H1 (cell line): ENCODE measurements at regions of chr17 and their contacts with region 1.

Region 1: GRCh38 chr17:42019509-42020404 is at the start of gene NKIRAS2:
- DNase-seq: peak; percentile 72 to 94
- H3K4me3 ChIP-seq: peak within 1 kb of the TSS; percentile 84 to 99 (median 89)
- H3K27ac ChIP-seq: no peak within 1 kb of the TSS
- H3K4me1 ChIP-seq: peaks cover 0 to 5% (median 1%) of the 10 kb centered on the region in 4 experiments; a peak in 3 of 7 replicates
- H3K27me3 ChIP-seq: no peaks in the 10 kb centered on the region
- CTCF ChIP-seq: peak; percentile 77 to 85 (median 81)
- EP300 ChIP-seq: no peak
- POLR2A ChIP-seq: peak in 1 of 2 experiments; percentile 77; a peak in 1 of 3 replicates
- RAD21 ChIP-seq: peak in 1 of 2 experiments; percentile 33; a peak in 2 of 4 replicates
- total RNA-seq, gene NKIRAS2: 31.1 and 34.5 TPM in 2 replicates

Region 2: GRCh38 chr17:41918314-41919164 is 101.2 kb before region 1 on chr17 and contains the start of gene ACLY:
- CTCF ChIA-PET with region 1: interaction called, 4 read pairs
- POLR2A ChIA-PET with region 1: interaction called, 15 read pairs
- DNase-seq: peak; percentile 94 to 98
- H3K4me3 ChIP-seq: peak within 1 kb of the TSS; percentile 74 to 99 (median 93)
- H3K27ac ChIP-seq: peak within 1 kb of the TSS; percentile 85
- H3K4me1 ChIP-seq: peaks cover 13 to 31% (median 24%) of the 10 kb centered on the region in 4 experiments
- H3K27me3 ChIP-seq: no peaks in the 10 kb centered on the region
- CTCF ChIP-seq: 0 out of 4 replicates have a peak, but pooled peaks of 1 of the 3 experiments have one; percentile 5
- EP300 ChIP-seq: no peak; a peak in 1 of 3 replicates
- POLR2A ChIP-seq: peak; percentile 30 to 95
- RAD21 ChIP-seq: no peak
- total RNA-seq, gene ACLY: 388 and 393 TPM in 2 replicates

Region 3: DNA sequence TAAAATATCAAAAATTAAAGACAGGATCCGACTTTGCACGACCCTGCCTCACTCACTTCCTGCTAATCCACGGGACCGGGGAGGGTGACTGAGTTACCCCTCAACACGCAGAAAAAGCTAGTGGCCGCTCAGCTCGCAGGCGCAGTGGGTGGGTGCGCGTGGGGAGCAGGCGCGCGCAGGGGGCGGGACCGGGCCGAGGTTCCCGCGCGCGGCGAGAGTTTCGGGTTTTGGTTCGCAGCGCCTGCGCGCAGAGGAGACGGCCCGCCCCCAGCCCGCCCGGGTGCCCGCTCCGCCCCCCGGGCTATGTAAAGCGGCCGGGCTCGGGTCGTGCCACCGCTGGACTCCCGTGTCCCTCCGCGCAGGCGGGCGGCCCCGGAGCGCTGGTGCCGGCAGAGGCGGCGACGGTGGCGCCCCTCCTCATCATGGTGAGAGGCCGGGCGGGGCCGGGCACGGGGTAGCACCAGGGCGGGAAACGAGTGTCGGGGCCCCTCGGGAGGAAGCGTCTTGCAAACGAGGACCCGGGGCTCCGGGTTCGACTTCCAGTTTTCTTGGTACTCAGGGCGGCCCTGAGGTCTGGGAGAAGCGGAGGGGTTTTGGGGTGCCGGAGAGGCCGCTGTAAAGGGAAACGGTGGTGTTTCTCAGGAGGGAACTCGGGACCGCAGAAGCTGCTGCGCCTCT is 53.2 kb before region 1 on chr17 and contains the start of gene CNP:
- CTCF ChIA-PET with region 1: interaction called, 8 read pairs
- POLR2A ChIA-PET with region 1: interaction called, 67 read pairs
- DNase-seq: peak in 1 of 2 experiments; percentile 90
- H3K4me3 ChIP-seq: peak within 1 kb of the TSS; percentile 71 to 96 (median 78)
- H3K27ac ChIP-seq: peak within 1 kb of the TSS; percentile 65
- H3K4me1 ChIP-seq: peaks cover 0 to 10% (median 5%) of the 10 kb centered on the region in 4 experiments; a peak in 6 of 7 replicates
- H3K27me3 ChIP-seq: no peaks in the 10 kb centered on the region
- CTCF ChIP-seq: no peak
- EP300 ChIP-seq: 0 out of 3 replicates have a peak, but pooled peaks of 1 of the 2 experiments have one; percentile 7
- POLR2A ChIP-seq: peak; percentile 49 to 53; a peak in 2 of 3 replicates
- RAD21 ChIP-seq: no peak
- total RNA-seq, gene CNP: 60.6 and 64.2 TPM in 2 replicates

Region 4: DNA sequence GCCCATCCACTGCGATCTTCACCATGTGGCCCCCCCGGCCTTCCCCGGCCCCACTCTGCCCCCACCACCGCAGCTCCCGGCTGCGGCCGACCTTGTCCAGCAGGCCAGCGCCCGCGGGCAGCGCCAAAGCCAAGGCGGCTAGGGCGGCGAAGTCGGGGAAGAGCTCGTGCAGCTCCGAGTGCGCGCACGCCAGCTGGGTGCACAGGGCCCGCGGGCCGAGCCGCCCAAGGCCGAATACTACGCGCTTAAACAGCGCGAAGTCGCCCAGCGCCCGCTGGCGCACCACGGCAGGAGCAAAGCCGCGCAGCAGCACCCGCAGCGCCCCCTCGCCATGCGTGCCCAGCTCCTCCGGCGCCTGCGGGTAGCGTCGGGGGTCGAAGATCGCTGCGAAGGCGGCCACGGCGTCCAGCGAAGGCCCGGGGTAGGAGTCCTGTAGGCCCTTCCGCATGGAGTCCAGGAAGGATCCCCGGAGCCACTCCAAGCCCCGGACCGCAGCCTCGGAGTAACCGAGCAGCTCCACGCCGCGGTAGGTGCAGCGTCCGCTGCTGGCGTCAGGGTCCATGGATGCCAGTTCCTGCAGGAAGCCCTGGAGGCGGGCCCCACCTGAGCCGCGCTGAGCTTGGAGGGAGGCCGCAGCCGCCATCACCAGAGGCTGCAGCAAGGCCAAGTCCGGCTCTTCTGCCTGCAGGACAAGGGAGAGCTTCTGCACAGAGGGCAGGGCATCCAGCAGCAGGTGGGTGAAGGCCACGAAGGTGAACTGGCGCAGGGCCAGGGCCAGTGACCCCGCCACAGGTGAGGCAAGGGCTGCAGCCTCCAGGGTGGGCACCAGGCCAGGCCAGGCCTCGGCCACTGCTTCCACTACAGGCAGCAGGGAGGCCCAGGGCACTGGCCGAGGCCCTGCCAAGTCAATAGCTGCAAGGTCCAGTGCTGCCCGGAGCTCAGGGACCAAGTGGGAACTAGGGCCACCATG is 20.3 kb after region 1 on chr17:
- CTCF ChIA-PET with region 1: interaction called, 191 read pairs
- POLR2A ChIA-PET with region 1: interaction called, 21 read pairs
- DNase-seq: no peak
- H3K4me3 ChIP-seq: no peak overlapping the region
- H3K27ac ChIP-seq: no peak overlapping the region
- H3K4me1 ChIP-seq: peaks cover 0 to 6% (median 2%) of the 10 kb centered on the region in 4 experiments; a peak in 1 of 7 replicates
- H3K27me3 ChIP-seq: no peaks in the 10 kb centered on the region
- CTCF ChIP-seq: no peak
- EP300 ChIP-seq: no peak
- POLR2A ChIP-seq: no peak
- RAD21 ChIP-seq: no peak

Region 5: GRCh38 chr17:42120770-42121769 is 101.3 kb after region 1 on chr17 and contains the start of gene KAT2A:
- CTCF ChIA-PET with region 1: interaction called, 1,084 read pairs
- POLR2A ChIA-PET with region 1: interaction called, 22 read pairs
- DNase-seq: peak; percentile 43 to 86
- H3K4me3 ChIP-seq: peak within 1 kb of the TSS; percentile 38 to 84 (median 60)
- H3K27ac ChIP-seq: no peak within 1 kb of the TSS; the same call in 1 of the 2 replicates
- H3K4me1 ChIP-seq: peaks cover 0 to 17% (median 13%) of the 10 kb centered on the region in 4 experiments; a peak in 6 of 7 replicates
- H3K27me3 ChIP-seq: no peaks in the 10 kb centered on the region; a peak in 2 of 7 replicates
- CTCF ChIP-seq: no peak
- EP300 ChIP-seq: no peak
- POLR2A ChIP-seq: peak in 1 of 2 experiments; percentile 81; a peak in 2 of 3 replicates
- RAD21 ChIP-seq: no peak
- total RNA-seq, gene KAT2A: 32.5 and 34.2 TPM in 2 replicates

Region 6: GRCh38 chr17:42329025-42329976 is 309.5 kb after region 1 on chr17:
- CTCF ChIA-PET with region 1: no interaction called
- POLR2A ChIA-PET with region 1: no interaction called
- DNase-seq: peak; percentile 74 to 89
- H3K4me3 ChIP-seq: peak overlapping the region in 2 of 4 experiments; percentile 17 to 39; a peak in 4 of 8 replicates
- H3K27ac ChIP-seq: peak overlapping the region; percentile 86
- H3K4me1 ChIP-seq: peaks cover 0 to 20% (median 9%) of the 10 kb centered on the region in 4 experiments; a peak in 5 of 7 replicates
- H3K27me3 ChIP-seq: no peaks in the 10 kb centered on the region
- CTCF ChIP-seq: no peak
- EP300 ChIP-seq: peak in 1 of 2 experiments; percentile 63; a peak in 1 of 3 replicates
- POLR2A ChIP-seq: peak in 1 of 2 experiments; percentile 73; a peak in 2 of 3 replicates
- RAD21 ChIP-seq: no peak